ENCODE measurements at regions of chr1 and their contacts with region 1.

Region 1: GRCh38 chr1:156705918-156706656 is 704 bp upstream of the CRABP2 start:
- DNase-seq: peak; percentile 87

Region 2: GRCh38 chr1:156677616-156678596 is 28.2 kb before region 1 on chr1:
- CTCF ChIA-PET with region 1: interaction called, 9 read pairs
- POLR2A ChIA-PET with region 1: interaction called, 10 read pairs
- DNase-seq: peak; percentile 80

Region 3: DNA sequence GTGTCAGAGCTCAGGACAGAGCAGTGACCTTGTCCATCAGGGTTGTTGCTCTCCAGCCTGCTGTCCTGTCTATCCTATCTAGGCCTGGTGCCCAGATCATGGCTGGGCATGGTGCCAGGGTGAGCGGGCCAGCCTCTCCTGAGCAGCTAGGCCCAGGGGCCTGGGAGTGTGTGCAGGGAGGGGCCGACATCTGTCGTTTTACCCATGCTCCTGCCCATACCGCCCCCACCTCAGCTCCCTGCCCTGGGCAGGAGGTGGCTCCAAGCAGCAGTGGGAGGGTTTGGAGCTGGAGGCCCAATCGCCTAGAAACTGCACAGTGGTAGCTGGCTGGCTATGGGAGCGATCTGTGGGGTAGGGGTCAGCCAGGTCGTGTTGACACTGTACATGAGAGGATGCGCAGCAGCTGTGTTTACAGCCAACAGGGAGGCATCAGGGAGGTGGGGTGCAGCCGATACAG is 146.4 kb after region 1 on chr1:
- CTCF ChIA-PET with region 1: no interaction called
- POLR2A ChIA-PET with region 1: no interaction called
- DNase-seq: no peak

Measured in HEK293T (cell line).